Aorta (tissue), 5 donors: ENCODE measurements at regions of chr16 and their contacts with region 1.

Region 1: GRCh38 chr16:86664533-86665318 is 86.4 kb downstream of the FOXL1 start:
- DNase-seq: peak in 1 of 2 donors; percentile 64
- ATAC-seq: peak; percentile 27
- H3K4me3 ChIP-seq: no peak overlapping the region
- H3K27ac ChIP-seq: peak overlapping the region in 1 of 2 donors; percentile 15
- H3K4me1 ChIP-seq: no peaks in the 10 kb centered on the region
- H3K27me3 ChIP-seq: no peaks in the 10 kb centered on the region

Region 2: GRCh38 chr16:86584726-86585721 is 79.7 kb before region 1 on chr16:
- intact Hi-C with region 1: loop called in 1 of 2 experiments (anchors 5 kb)
- DNase-seq: no peak
- ATAC-seq: peak; percentile 60
- H3K4me3 ChIP-seq: no peak overlapping the region
- H3K27ac ChIP-seq: peak overlapping the region; percentile 92 to 99
- H3K4me1 ChIP-seq: peaks cover 10 to 11% of the 10 kb centered on the region in 2 donors
- H3K27me3 ChIP-seq: no peaks in the 10 kb centered on the region

Region 3: GRCh38 chr16:86611525-86611855 is 53.2 kb before region 1 on chr16:
- intact Hi-C with region 1: loop called in 1 of 2 experiments (anchors 5 kb)
- DNase-seq: peak in 1 of 2 donors; percentile 73
- ATAC-seq: no peak
- H3K4me3 ChIP-seq: no peak overlapping the region
- H3K27ac ChIP-seq: peak overlapping the region in 1 of 2 donors; percentile 86
- H3K4me1 ChIP-seq: peaks cover 5 to 7% of the 10 kb centered on the region in 2 donors
- H3K27me3 ChIP-seq: no peaks in the 10 kb centered on the region